ENCODE measurements at regions of chr9 and their contacts with region 1.

Region 1: DNA sequence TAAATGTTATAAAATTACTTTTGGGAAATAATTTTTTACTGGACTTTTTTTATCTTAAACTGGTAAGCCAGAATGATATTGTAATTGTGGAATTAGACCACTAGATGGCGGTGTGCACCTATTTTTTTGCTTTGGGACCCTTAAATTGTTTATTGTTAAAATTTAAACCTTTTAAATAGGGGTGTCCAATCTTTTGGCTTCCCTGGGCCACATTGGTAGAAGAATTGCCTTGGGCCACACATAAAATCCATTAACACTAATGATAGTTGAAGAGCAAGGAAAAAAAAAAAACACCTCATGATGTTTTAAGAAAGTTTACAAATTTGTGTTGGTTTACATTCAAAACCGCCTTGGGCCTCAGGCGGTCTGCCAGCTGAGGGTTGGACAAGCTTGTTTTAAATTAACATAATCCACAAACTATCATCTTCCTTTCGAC is 28.4 kb upstream of the GADD45G start:
- DNase-seq: peak; percentile 48
- H3K4me3 ChIP-seq: no peak overlapping the region
- H3K27ac ChIP-seq: no peak overlapping the region
- H3K4me1 ChIP-seq: no peaks in the 10 kb centered on the region
- H3K27me3 ChIP-seq: peaks cover 15 to 21% of the 10 kb centered on the region in 2 experiments
- CTCF ChIP-seq: peak; percentile 33 to 37
- POLR2A ChIP-seq: no peak

Region 2: GRCh38 chr9:89619019-89619418 is 42.6 kb after region 1 on chr9:
- CTCF ChIA-PET with region 1: no interaction called
- POLR2A ChIA-PET with region 1: no interaction called
- dilution Hi-C with region 1: no loop called
- intact Hi-C with region 1: no loop called
- DNase-seq: no peak
- H3K4me3 ChIP-seq: no peak overlapping the region
- H3K27ac ChIP-seq: no peak overlapping the region
- H3K4me1 ChIP-seq: no peaks in the 10 kb centered on the region
- H3K27me3 ChIP-seq: no peaks in the 10 kb centered on the region
- CTCF ChIP-seq: no peak
- POLR2A ChIP-seq: no peak

Region 3: DNA sequence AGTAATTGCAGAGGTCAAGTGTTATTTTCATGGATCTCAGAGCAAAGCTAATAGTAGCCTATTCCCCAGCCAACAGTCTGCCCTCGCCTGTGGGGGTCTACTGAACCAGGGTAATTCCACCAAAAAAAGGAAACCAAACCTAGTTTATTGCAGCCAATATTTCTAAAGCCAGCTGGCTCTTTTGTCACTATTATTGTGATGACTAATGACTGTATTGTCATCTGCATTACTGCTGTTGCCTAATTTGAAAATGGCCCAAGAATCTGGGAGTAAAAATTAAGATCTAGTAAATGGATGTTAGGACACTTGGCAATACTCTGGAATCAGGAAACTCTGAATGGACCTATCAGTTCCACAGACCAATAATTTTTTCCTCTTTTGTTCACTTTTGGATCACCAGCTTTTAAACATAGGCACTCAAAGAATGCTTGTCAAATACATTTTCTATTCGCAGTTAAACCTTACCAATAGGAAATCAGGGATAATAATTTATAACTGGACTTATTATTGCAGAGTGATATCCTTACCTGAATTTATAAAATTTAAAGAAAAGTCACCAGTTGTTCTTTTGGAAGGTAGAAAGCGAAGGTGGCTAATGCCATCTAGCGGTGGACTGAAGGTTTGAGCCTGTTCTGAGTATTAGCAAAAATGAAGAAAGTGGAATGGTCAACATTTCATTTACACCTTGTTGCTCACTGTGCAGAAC is 1294.4 kb after region 1 on chr9:
- CTCF ChIA-PET with region 1: interaction called, 9 read pairs
- POLR2A ChIA-PET with region 1: no interaction called
- dilution Hi-C with region 1: no loop called
- intact Hi-C with region 1: loop called (anchors 1 kb)
- DNase-seq: peak; percentile 32
- H3K4me3 ChIP-seq: no peak overlapping the region
- H3K27ac ChIP-seq: no peak overlapping the region
- H3K4me1 ChIP-seq: no peaks in the 10 kb centered on the region
- H3K27me3 ChIP-seq: no peaks in the 10 kb centered on the region
- CTCF ChIP-seq: peak; percentile 63 to 65
- POLR2A ChIP-seq: no peak

Measured in endothelial cell of umbilical vein (primary cell).